ENCODE measurements at regions of chr4 and their contacts with region 1.

Region 1: GRCh38 chr4:38179690-38180377 is 219.6 kb downstream of the PTTG2 start:
- DNase-seq: peak; percentile 59
- H3K4me3 Mint-ChIP-seq: no peak overlapping the region
- H3K27ac Mint-ChIP-seq: no peak overlapping the region
- H3K4me1 Mint-ChIP-seq: peaks cover 54% of the 10 kb centered on the region
- H3K27me3 Mint-ChIP-seq: peaks cover 11% of the 10 kb centered on the region

Region 2: DNA sequence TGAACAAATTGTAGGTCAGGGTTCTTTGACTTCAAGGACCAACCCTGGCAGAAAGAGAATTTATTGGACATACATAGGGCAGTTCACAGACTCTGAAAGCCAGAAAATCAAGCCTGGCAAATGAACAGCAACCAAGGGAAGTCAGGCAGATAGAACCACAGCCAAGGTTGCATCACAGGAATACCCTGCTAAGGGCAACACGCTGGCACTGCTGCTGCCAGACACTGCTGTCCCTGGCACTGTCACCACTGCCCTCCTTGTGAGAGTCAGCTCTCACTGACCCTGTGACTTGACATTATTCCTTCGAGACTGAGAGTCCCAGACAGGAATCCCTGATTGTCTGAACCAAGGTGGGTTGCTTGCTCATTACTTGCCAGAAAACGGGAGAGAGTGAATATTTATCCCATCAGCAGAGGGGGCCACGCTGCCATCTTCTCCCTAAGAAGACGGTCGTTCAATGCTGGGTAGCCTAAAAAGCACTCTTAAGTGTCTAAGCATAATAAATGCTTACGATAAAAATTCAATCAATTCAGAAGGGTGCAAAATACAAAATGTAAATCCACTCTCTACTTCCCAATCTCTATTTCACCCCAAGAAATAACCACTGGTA is 242.8 kb before region 1 on chr4:
- intact Hi-C with region 1: no loop called
- DNase-seq: no peak
- H3K4me3 Mint-ChIP-seq: no peak overlapping the region
- H3K27ac Mint-ChIP-seq: no peak overlapping the region
- H3K4me1 Mint-ChIP-seq: no peaks in the 10 kb centered on the region
- H3K27me3 Mint-ChIP-seq: peaks cover 10% of the 10 kb centered on the region

Region 3: GRCh38 chr4:38160487-38161207 is 19.2 kb before region 1 on chr4:
- intact Hi-C with region 1: loop called (anchors 1 kb)
- DNase-seq: peak; percentile 66
- H3K4me3 Mint-ChIP-seq: peak overlapping the region; percentile 51
- H3K27ac Mint-ChIP-seq: peak overlapping the region; percentile 90
- H3K4me1 Mint-ChIP-seq: peaks cover 80% of the 10 kb centered on the region
- H3K27me3 Mint-ChIP-seq: peaks cover 7% of the 10 kb centered on the region

Region 4: DNA sequence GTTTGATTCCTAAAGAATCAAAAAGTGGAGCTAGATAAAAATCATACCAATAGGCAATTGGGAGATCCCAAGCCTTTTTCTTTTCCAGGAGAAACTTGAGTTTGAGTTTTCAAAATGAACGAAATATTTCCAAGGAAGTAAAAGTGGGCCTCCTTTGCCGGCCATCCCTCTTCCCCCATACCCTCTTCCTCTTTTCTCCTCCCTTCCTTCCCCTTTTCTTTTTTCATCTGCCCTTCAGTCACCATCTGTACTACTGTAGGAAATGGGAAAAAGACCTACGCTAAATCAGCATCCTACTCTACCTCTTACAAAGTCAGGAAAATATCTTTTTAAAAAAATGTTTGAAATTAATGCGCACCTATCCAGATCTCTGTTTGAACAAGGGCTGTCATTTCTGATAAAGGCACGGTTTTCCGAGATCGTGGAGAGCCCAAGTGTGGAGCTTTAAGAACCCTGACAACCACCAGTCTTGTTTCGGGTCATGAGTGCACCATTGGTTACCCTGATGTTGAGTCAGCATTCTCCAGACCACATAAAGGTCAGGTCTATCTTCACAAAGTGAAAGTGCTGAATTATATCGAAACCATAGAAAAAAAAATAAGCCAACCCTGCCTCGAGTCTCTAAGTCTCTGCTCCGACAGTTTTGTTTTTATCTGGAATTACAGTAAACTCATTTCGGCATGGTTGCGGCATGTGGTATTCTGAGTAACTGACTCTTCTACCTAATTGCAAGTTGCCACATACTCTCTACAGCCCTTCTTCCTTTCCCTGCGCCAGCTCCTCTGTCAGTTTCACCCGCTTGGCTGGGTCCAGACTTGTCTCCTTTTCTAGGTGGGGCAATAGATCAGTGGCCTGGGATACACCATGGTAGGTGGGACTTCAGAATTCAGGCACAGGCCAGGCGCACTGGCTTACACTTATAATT is 344.0 kb after region 1 on chr4:
- intact Hi-C with region 1: loop called (anchors 5 kb)
- DNase-seq: peak; percentile 48
- H3K4me3 Mint-ChIP-seq: peak overlapping the region; percentile 19
- H3K27ac Mint-ChIP-seq: peak overlapping the region; percentile 51
- H3K4me1 Mint-ChIP-seq: peaks cover 23% of the 10 kb centered on the region
- H3K27me3 Mint-ChIP-seq: peaks cover 32% of the 10 kb centered on the region

Region 5: GRCh38 chr4:38730830-38731646 is 551.2 kb after region 1 on chr4:
- intact Hi-C with region 1: loop called (anchors 1 kb)
- DNase-seq: peak; percentile 66
- H3K4me3 Mint-ChIP-seq: no peak overlapping the region
- H3K27ac Mint-ChIP-seq: no peak overlapping the region
- H3K4me1 Mint-ChIP-seq: peaks cover 22% of the 10 kb centered on the region
- H3K27me3 Mint-ChIP-seq: peaks cover 22% of the 10 kb centered on the region